Esophagus squamous epithelium (tissue), 5 donors: ENCODE measurements at regions of chr12 and their contacts with region 1.

Region 1: GRCh38 chr12:53287741-53288216 is 7.6 kb upstream of the PFDN5 start:
- DNase-seq: no peak
- H3K4me3 ChIP-seq: no peak overlapping the region
- H3K27ac ChIP-seq: peak overlapping the region; percentile 62 to 86 (median 84)
- H3K4me1 ChIP-seq: peaks cover 6 to 64% (median 19%) of the 10 kb centered on the region in 3 donors
- H3K27me3 ChIP-seq: no peaks in the 10 kb centered on the region
- CTCF ChIP-seq: peak; percentile 55 to 83 (median 72)
- POLR2A ChIP-seq: no peak

Region 2: GRCh38 chr12:53213348-53213747 is 74.4 kb before region 1 on chr12:
- intact Hi-C with region 1: loop called (anchors 5 kb)
- DNase-seq: no peak
- H3K4me3 ChIP-seq: no peak overlapping the region
- H3K27ac ChIP-seq: peak overlapping the region in 3 of 4 donors; percentile 9 to 100 (median 98)
- H3K4me1 ChIP-seq: peaks cover 39 to 70% (median 47%) of the 10 kb centered on the region in 3 donors
- H3K27me3 ChIP-seq: no peaks in the 10 kb centered on the region
- CTCF ChIP-seq: peak; percentile 84 to 98 (median 94)
- POLR2A ChIP-seq: no peak